Psoas muscle (tissue), 8 donors: ENCODE measurements at regions of chr21 and their contacts with region 1.

Region 1: DNA sequence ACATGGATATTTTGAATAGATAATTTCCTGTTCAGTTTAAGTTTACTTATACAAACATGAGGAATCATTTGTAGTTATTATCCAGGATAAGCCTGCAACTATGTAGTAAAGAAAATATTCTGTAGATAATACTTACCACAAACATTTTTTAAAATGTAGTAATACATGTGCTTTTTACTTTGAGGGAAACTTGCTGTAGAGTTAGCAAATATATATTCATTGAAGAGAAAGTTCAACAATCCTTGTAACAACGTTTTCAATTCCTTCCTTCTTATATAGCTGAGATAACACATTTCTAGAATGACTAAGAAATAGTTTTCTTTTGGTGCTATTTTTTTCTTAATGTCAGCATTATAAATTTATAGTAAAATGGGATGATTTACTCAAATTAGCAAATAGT is 664.6 kb upstream of the ADAMTS5 start:
- DNase-seq: no peak
- ATAC-seq: no peak
- H3K4me3 ChIP-seq: no peak overlapping the region
- H3K27ac ChIP-seq: no peak overlapping the region
- H3K4me1 ChIP-seq: peaks cover 11% of the 10 kb centered on the region
- H3K27me3 ChIP-seq: no peaks in the 10 kb centered on the region
- CTCF ChIP-seq: no peak

Region 2: DNA sequence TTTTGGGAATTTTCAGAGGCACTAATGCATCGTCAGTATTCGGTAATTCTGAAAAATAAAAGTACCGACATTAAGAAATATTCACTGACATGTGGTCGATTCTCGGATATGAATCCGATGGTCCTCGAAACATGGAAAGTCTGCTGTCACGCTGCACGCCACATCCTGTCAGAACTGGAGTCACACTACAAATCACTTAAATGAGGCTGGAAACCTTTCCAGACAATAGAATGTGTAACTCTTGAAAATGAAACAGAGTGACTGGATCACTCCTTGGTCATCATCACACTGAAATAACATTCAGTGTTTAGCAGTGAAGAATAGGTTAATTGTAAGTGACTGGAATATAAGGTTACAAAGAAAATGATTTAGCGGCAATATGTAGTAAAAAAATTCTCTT is 44.5 kb before region 1 on chr21:
- intact Hi-C with region 1: loop called in 1 of 2 experiments (anchors 5 kb)
- DNase-seq: no peak
- ATAC-seq: peak in 3 of 4 donors; percentile 33 to 56 (median 36)
- H3K4me3 ChIP-seq: no peak overlapping the region
- H3K27ac ChIP-seq: no peak overlapping the region
- H3K4me1 ChIP-seq: no peaks in the 10 kb centered on the region
- H3K27me3 ChIP-seq: no peaks in the 10 kb centered on the region
- CTCF ChIP-seq: no peak

Region 3: DNA sequence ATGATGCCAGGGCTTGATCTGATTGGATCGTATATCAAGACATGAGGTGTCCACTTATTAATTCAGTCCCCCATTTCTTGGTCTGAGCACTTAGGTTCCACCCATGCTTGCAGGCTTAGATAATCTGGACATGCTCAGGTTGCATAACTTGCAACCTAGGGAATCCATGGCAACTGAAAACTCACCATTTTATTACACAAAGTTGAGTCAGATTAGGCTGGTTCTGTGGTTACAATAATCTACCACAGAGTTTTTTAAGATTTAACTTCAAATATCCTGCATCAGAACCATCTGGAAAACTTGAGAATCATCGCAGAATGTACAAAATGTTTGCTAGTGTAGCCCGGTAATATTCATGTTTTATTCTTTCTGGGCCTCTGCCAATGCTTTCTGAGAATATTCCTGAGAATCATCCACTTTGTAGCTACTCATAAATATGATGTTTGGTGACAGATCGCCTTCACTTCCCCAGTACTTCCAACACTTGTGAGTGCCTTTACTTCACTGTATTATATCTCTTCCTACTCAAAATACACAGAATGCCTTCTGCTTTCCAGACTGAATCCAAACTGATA is 42.7 kb after region 1 on chr21:
- intact Hi-C with region 1: no loop called
- DNase-seq: no peak
- ATAC-seq: no peak
- H3K4me3 ChIP-seq: no peak overlapping the region
- H3K27ac ChIP-seq: no peak overlapping the region
- H3K4me1 ChIP-seq: no peaks in the 10 kb centered on the region
- H3K27me3 ChIP-seq: no peaks in the 10 kb centered on the region
- CTCF ChIP-seq: no peak